ENCODE measurements at regions of chr11 and their contacts with region 1.

Region 1: GRCh38 chr11:130213143-130213978 is 53.8 kb downstream of the ST14 start:
- DNase-seq: peak; percentile 76
- ATAC-seq: peak; percentile 76
- H3K4me3 ChIP-seq: no peak overlapping the region
- H3K27ac ChIP-seq: no peak overlapping the region
- H3K4me1 ChIP-seq: no peaks in the 10 kb centered on the region; the same call in 1 of the 2 replicates
- H3K27me3 ChIP-seq: no peaks in the 10 kb centered on the region
- CTCF ChIP-seq: peak; percentile 98

Region 2: GRCh38 chr11:130314750-130315285 is 101.5 kb after region 1 on chr11 and contains the start of gene ZBTB44:
- CTCF ChIA-PET with region 1: no interaction called
- POLR2A ChIA-PET with region 1: no interaction called
- intact Hi-C with region 1: loop called (anchors 10 kb)
- DNase-seq: peak; percentile 88
- ATAC-seq: peak; percentile 77
- H3K4me3 ChIP-seq: peak within 1 kb of the TSS; percentile 82
- H3K27ac ChIP-seq: peak within 1 kb of the TSS; percentile 40; the same call in 1 of the 2 replicates
- H3K4me1 ChIP-seq: peaks cover 19% of the 10 kb centered on the region
- H3K27me3 ChIP-seq: no peaks in the 10 kb centered on the region
- CTCF ChIP-seq: no peak
- total RNA-seq, gene ZBTB44: 27.5 and 28.9 TPM in 2 replicates

Region 3: DNA sequence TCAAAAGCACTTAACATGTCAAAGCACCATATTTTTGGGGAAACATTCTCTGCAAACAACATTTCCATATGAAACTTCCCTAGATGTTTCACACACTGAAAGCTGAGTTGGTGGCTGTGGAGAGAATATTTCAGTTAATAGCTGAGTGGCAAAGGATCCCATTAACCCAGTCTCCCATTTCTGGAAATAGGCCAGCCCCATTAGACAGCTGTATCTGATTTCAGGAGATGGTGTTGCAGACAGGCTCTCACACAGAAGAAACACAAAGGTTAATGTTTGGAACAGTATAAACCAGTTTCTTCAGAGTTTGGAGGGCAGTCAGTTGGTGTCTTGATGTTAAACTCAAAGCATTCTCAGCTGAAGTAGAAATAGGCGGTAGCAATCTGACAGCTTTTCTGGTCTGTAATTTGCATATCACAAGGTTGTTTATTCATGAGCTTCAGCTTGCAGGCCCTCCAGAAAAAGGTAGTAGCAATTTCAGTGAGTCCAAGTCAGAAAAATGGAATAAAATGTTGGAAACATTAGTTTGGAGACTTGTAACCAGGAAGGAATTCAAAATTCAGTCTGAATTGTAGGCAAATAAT is 116.8 kb after region 1 on chr11:
- CTCF ChIA-PET with region 1: no interaction called
- POLR2A ChIA-PET with region 1: no interaction called
- intact Hi-C with region 1: no loop called
- DNase-seq: no peak
- ATAC-seq: no peak
- H3K4me3 ChIP-seq: no peak overlapping the region
- H3K27ac ChIP-seq: no peak overlapping the region
- H3K4me1 ChIP-seq: no peaks in the 10 kb centered on the region
- H3K27me3 ChIP-seq: no peaks in the 10 kb centered on the region
- CTCF ChIP-seq: no peak

Region 4: DNA sequence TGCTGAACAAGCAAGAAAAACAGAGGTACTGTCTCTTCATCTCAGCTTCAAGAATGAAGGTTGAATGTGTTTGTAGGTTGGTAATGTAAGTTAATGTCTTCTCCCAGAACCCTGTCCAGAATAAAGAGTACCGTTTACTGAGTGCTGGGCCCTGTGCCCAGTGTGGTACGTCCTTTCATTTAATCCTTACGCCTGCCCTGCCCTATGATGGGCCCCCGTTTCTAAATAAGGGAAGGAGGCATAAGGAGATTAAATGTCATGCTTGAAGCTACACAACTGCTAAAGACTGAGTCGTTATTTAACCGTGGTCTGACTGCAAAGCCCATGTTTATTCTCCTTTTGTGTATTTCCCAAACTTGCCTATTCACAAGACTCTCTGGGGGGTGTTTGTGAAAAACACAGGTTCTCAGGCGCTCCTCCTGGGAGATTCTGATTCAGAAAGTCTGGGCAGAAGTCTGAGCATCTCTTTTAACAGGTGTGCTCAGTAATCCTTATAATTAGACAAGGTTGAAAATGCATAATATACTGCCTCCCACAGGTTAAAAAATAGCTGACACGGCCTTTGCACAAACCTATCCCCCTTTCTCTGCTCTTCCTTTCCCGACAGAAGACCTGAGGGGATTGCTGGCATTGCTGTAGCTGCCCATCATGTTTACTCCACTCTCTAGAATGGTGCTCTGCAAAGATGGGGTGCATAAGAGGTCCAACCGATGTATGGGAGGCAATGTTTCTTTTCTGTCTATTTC is 157.7 kb after region 1 on chr11:
- CTCF ChIA-PET with region 1: interaction called, 3 read pairs
- POLR2A ChIA-PET with region 1: no interaction called
- intact Hi-C with region 1: loop called (anchors 1 kb)
- DNase-seq: peak; percentile 39
- ATAC-seq: peak; percentile 51
- H3K4me3 ChIP-seq: no peak overlapping the region
- H3K27ac ChIP-seq: no peak overlapping the region
- H3K4me1 ChIP-seq: no peaks in the 10 kb centered on the region
- H3K27me3 ChIP-seq: peaks cover 34% of the 10 kb centered on the region
- CTCF ChIP-seq: peak; percentile 58

Region 5: DNA sequence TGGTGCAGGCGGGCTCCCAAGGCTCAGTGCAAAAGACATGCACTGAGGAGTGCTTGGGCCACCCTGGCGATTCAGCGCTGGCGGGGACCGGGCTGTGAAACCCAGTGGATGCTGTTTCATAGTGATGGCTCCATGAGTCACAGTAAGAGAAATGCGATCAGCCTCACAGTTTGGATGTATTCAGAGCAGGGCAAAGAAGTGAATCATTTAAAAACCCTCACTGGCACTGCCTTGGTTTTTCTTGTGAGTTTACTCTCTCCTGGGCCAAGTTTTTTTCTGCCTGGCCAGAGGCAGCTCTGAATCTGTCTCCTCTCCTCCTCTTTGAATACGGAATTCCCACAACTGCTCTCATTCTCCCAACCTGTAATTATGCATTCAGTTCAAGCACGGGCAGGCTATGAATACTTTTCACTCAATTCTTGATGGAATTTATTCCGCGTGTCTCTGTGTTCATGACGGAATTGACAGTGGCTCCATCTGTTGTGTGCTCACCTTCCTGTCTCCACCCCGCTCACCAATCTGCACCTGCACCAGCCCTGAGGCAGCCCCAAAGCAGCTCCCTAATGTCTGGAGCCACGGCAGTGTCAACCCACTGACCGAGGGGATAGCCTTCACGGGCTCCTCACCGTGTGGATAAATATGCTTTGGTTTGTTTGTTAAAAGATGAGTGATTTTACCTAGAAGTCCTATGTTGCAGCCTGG is 200.2 kb after region 1 on chr11:
- CTCF ChIA-PET with region 1: no interaction called
- POLR2A ChIA-PET with region 1: no interaction called
- intact Hi-C with region 1: loop called (anchors 5 kb)
- DNase-seq: peak; percentile 97
- ATAC-seq: peak; percentile 99
- H3K4me3 ChIP-seq: peak overlapping the region; percentile 52
- H3K27ac ChIP-seq: peak overlapping the region; percentile 57
- H3K4me1 ChIP-seq: peaks cover 20% of the 10 kb centered on the region
- H3K27me3 ChIP-seq: no peaks in the 10 kb centered on the region; the same call in 1 of the 2 replicates
- CTCF ChIP-seq: no peak

Measured in PC-3 (cell line).